Activated CD4-positive, alpha-beta T cell treated with anti-CD3 and anti-CD28 coated beads, Interleukin-2, amount 10 ng/mL, durations not matched to agents 24 days and 14 days (primary cell): ENCODE measurements at regions of chr1 and their contacts with region 1.

Region 1: DNA sequence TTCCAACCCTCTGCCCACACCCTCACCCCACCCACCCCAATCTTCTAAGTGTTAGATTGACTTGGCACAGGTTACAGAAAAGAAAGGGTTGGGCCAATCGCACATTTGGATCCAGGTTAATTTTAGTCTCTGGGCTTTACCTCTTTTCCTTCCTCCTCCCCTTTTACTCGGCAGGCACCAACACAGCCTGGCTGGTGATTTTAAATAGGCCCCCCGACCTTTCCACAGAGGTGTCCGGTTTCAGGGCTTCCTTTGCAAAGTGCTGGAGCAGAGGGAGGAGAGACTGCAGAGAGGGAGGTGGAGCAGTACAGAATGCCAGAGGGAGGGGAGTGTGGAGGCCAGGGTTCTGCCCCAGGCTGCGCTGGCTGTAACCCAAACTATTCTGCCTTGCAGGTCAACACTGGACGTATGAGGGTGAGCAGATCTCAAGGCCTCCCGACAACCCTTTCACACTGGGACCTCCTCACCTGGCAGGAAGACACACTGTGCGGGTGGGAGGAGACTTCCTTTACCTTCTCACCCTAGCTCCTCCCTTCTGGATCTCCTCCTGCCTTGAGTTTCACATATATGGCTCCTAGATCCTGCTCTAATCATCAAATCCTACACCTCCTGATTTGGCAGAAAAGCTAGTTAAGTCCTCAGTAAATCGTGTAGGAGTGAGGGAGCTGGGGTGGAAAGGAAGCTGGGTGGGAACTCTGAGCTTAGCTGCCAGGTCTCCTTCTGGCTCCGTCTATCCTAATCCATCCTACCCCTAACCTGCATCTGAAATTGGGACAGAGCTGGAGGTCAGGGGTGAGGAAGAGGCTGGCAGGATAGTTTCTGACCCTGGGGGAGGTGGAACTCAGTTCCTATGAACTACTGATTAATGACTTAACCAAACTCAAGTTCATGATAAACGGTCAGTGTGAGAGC is 2.4 kb downstream of the CA14 start:
- DNase-seq: no peak
- H3K4me3 Mint-ChIP-seq: no peak overlapping the region
- H3K27ac Mint-ChIP-seq: no peak overlapping the region
- H3K4me1 Mint-ChIP-seq: peaks cover 18% of the 10 kb centered on the region
- H3K27me3 Mint-ChIP-seq: peaks cover 49% of the 10 kb centered on the region

Region 2: GRCh38 chr1:150034336-150034735 is 225.7 kb before region 1 on chr1:
- intact Hi-C with region 1: no loop called
- DNase-seq: no peak
- H3K4me3 Mint-ChIP-seq: no peak overlapping the region
- H3K27ac Mint-ChIP-seq: no peak overlapping the region
- H3K4me1 Mint-ChIP-seq: no peaks in the 10 kb centered on the region
- H3K27me3 Mint-ChIP-seq: peaks cover 18% of the 10 kb centered on the region

Region 3: DNA sequence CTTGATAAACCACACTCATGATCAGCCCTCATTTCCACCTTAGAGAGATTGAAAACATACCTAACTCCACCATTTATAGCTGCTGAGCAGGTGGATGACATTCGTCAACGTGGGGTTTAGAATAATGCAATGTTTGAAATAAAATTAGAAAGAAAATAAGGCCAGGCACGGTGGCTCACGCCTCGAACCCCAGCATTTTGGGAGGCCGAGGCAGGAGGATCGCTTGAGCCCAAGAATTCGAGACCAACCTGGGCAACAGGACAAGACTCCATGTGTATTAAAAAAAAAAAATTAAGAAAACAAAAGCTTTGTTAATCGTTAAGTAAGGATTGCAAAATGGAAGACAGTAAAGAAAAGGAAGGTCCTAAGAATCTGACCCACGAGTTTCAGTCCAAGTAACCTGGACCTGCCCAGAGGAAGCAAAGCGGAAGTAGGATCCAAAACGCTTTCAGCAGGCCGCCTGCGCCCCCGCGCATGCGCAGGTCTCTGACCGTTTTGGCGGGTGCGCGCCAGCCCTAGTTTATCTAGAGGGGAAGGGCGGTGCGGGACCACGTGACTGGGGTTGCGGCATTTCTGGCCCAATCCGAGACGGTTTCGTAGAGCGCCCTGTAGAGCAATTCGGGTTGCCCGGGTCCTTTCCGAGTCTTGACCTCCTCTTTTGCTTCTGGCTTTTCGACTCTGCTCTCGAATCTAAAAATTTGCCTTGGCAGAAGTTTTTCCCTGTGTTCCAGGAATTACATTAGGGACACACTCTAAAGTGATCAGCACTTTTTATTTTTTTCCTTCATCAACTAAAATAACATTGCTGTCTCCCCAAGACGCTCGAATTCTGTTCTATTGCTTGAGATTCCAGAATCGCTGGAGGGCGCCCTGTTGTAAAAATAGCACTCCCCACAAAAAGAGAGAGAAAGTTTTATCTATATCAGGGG is 46.6 kb before region 1 on chr1:
- intact Hi-C with region 1: loop called (anchors 1 kb)
- DNase-seq: peak; percentile 97
- H3K4me3 Mint-ChIP-seq: peak overlapping the region; percentile 91
- H3K27ac Mint-ChIP-seq: peak overlapping the region; percentile 96
- H3K4me1 Mint-ChIP-seq: peaks cover 15% of the 10 kb centered on the region
- H3K27me3 Mint-ChIP-seq: peaks cover 5% of the 10 kb centered on the region

Region 4: DNA sequence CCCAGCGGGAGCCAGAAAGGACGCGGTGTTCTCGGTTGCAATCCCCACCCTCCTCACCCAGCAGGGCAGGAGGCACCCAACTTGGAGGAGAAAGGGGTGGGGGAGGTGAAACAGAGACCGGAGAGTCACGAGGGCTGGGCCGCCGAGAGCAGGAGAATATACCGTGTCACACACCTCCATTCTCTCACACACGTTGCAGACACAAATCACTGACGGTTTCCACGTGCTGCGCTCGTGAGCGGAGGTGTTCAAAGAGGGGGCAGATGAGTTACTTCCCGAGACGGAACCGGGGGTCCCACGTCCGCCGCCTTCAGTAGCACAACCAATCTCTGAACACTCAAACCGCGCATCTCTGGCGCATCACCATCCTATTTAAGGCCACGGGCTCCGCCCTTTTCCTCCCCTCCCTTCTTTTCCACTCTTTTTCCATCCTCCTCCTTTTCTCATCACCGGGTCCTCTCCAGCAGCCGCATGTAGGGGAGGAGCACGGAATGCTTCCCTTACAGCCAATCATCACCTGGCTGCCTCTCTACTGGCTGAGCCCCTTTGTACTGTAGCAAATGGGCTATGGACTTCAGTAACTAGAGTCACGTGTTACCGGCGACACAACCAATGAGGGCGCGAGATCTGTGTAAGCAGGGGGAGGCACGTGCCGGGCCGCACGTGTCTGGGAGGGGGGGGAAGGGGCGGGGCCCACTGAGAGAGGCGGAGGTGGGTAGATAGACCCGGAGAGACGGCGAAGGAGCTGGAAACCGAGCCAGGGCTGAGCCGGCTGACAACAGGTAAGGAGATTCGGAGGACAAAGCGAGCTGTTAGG is 22.0 kb after region 1 on chr1 and contains the start of gene CIART:
- intact Hi-C with region 1: loop called (anchors 1 kb)
- DNase-seq: peak; percentile 92
- H3K4me3 Mint-ChIP-seq: peak within 1 kb of the TSS; percentile 85
- H3K27ac Mint-ChIP-seq: peak within 1 kb of the TSS; percentile 87
- H3K4me1 Mint-ChIP-seq: peaks cover 23% of the 10 kb centered on the region
- H3K27me3 Mint-ChIP-seq: peaks cover 6% of the 10 kb centered on the region
- total RNA-seq, gene CIART: 6.0 and 7.5 TPM in 2 replicates

Region 5: GRCh38 chr1:150429805-150430204 is 169.8 kb after region 1 on chr1:
- intact Hi-C with region 1: loop called (anchors 5 kb)
- DNase-seq: no peak
- H3K4me3 Mint-ChIP-seq: no peak overlapping the region
- H3K27ac Mint-ChIP-seq: peak overlapping the region; percentile 22
- H3K4me1 Mint-ChIP-seq: peaks cover 7% of the 10 kb centered on the region
- H3K27me3 Mint-ChIP-seq: no peaks in the 10 kb centered on the region

Region 6: GRCh38 chr1:150532868-150533302 is 272.9 kb after region 1 on chr1:
- intact Hi-C with region 1: loop called (anchors 5 kb)
- DNase-seq: no peak
- H3K4me3 Mint-ChIP-seq: no peak overlapping the region
- H3K27ac Mint-ChIP-seq: no peak overlapping the region
- H3K4me1 Mint-ChIP-seq: peaks cover 3% of the 10 kb centered on the region
- H3K27me3 Mint-ChIP-seq: no peaks in the 10 kb centered on the region